ENCODE measurements at regions of chr9 and their contacts with region 1.

Region 1: DNA sequence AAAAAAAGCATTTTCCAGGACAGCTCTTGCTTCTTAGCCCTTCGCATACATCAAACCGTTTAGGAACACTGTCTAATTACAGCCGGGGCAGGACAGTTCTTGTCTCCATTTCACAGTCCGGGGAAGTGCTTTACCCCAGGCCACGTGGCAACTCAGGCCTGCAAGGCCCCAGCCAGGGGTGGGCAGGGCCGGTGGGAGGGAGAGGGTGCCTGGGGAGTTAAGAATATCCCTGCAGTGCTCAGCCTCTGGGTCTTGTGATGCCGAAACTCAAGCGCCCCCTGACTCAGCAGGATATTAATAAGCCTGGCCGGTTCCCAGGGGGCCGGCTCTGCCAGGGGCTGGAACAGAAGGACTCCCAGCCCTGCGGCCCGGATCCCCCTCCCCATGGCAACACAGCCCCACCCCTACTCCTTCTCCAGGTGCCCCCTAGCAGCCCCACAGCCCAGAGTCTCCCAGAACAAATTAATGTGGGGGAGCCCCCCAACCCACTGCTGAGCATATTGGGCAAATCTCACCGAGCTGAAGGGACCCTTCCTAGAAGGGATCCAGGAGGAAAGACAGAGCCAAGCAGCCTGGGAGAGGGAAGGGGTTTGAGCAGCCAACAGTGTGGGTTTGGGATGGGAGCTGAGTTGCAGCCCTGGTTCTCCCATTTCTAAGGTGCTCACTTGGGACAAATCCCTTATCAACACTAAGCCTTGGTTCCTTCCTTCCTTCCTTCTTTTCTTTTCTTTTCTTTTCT is 45.3 kb downstream of the PLPP7 start:
- DNase-seq: peak; percentile 89

Region 2: GRCh38 chr9:130794923-130795495 is 539.8 kb before region 1 on chr9:
- intact Hi-C with region 1: no loop called
- DNase-seq: no peak

Region 3: DNA sequence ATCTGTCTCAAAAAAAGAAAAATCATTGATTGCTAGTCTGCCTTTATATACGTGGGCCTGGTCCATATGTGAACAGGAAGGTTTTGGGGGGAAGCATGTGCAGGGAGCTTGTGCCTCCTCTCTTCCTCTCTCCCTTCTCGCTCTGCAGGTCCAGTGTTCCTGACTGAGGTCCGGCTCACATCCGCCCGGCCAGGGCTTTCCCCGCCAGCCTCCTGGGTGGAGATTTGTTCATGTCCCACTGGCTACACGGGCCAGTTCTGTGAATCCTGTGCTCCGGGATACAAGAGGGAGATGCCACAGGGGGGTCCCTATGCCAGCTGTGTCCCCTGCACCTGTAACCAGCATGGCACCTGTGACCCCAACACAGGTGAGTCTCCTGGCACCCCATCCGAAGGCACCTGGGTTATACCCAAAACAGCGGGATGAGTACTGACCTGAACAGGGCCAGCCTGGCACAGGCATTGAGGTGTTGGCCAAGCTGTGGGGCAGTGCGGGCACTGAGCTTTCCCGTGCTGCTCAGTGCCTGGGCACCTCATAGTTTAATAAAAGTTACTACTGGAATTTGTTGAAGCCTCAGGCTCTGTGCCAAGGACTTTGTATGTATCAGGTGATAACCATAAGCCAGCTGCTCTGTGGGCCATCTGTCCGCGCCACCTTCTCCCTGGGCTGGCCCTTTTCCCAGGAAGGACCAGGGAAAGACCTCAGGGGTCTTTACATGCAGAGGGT is 277.9 kb before region 1 on chr9:
- intact Hi-C with region 1: loop called (anchors 5 kb)
- DNase-seq: no peak

Region 4: DNA sequence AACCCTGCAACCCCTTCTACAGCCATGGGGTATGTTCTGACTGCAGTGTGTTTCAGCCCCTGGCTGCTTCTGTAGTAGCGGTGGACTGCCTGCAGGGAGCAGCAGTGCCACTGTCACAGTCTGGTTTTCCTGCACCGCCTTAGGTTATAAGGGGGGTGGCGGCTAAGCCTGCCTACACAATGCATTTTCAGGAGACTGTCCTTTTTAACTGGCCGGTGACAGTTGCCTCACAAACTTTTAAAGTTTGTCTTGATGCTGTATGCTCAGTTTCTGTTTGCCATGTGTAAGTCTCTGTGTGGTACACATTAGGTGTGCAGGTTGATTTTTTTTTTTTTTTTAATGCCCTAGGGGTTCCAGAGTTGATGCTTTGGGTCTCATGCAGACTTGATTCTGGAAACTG is 156.4 kb before region 1 on chr9:
- intact Hi-C with region 1: loop called (anchors 1 kb)
- DNase-seq: peak; percentile 87

Region 5: DNA sequence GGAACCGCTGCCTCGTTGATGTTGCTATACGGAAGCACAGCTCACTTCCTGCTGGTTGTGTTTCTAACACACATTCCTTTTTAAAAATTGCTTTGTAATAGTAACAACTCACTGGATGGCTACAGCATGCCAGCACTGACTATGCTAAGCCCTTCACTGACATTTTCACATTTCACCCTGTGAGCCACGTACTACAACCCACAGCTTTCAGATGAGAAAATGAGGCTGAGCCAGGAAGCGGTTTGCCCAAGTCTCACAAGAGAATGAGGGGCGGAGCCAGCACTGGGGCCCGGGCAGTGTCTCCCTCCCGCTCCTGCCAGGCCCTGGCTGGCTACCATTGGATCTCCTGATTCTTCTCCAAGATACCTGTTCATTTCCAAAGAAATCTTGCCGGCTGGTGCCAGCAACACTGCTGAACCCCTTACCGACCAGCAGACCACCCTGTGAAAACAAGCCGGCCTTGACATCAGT is 96.8 kb before region 1 on chr9:
- intact Hi-C with region 1: loop called (anchors 2 kb)
- DNase-seq: peak; percentile 84

Region 6: GRCh38 chr9:131277910-131278701 is 56.7 kb before region 1 on chr9:
- intact Hi-C with region 1: loop called (anchors 10 kb)
- DNase-seq: peak; percentile 92

Region 7: DNA sequence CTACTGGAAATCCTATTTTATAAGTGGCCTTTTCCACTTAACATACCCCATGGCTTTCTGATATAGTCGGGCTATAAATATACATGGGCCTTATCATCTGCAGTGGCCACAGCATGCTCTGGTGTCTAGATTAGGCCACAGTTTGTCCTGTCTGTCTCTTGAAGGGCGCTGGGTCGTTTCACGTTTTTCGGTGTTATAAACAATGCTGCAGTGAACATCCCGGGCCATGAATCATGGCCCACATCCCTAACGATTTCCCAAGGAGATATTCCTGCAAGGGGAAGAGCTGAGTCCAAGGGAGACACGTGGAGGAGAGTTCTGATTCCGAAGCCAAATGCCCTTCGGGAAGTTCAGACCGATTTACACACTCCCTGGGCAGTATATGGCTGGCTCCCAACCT is 36.9 kb before region 1 on chr9:
- intact Hi-C with region 1: loop called (anchors 2 kb)
- DNase-seq: no peak